Naive thymus-derived CD4-positive, alpha-beta T cell (primary cell): ENCODE measurements at regions of chr21 and their contacts with region 1.

Region 1: GRCh38 chr21:31180256-31181081 is 142.2 kb upstream of the KRTAP19-8 start:
- DNase-seq: peak in 6 of 9 donors; percentile 33 to 65 (median 50)
- ATAC-seq: peak; percentile 30
- H3K4me3 ChIP-seq: peak overlapping the region; percentile 46
- H3K4me3 Mint-ChIP-seq: peak overlapping the region; percentile 82 to 100 (median 87)
- H3K27ac ChIP-seq: peak overlapping the region; percentile 79
- H3K27ac Mint-ChIP-seq: peak overlapping the region; percentile 96 to 100 (median 99)
- H3K4me1 ChIP-seq: peaks cover 12 to 73% of the 10 kb centered on the region in 2 donors
- H3K4me1 Mint-ChIP-seq: peaks cover 44 to 92% (median 72%) of the 10 kb centered on the region in 7 donors
- H3K27me3 ChIP-seq: no peaks in the 10 kb centered on the region
- H3K27me3 Mint-ChIP-seq: no peaks in the 10 kb centered on the region

Region 2: GRCh38 chr21:29298348-29299045 is 1882.0 kb before region 1 on chr21 and contains the start of gene BACH1:
- CTCF ChIA-PET with region 1: no interaction called
- POLR2A ChIA-PET with region 1: no interaction called
- intact Hi-C with region 1: loop called in 1 of 2 experiments (anchors 10 kb)
- DNase-seq: peak; percentile 59 to 91 (median 76)
- ATAC-seq: peak; percentile 80
- H3K4me3 ChIP-seq: peak within 1 kb of the TSS; percentile 71
- H3K4me3 Mint-ChIP-seq: peak within 1 kb of the TSS; percentile 84 to 94 (median 90)
- H3K27ac ChIP-seq: peak within 1 kb of the TSS; percentile 86
- H3K27ac Mint-ChIP-seq: peak within 1 kb of the TSS; percentile 71 to 91 (median 78)
- H3K4me1 ChIP-seq: peaks cover 4 to 47% of the 10 kb centered on the region in 2 donors
- H3K4me1 Mint-ChIP-seq: peaks cover 42 to 85% (median 74%) of the 10 kb centered on the region in 7 donors
- H3K27me3 ChIP-seq: no peaks in the 10 kb centered on the region
- H3K27me3 Mint-ChIP-seq: peaks cover 0 to 3% (median 0%) of the 10 kb centered on the region in 5 donors
- total RNA-seq, gene BACH1: 26.0 to 95.6 (median 45.5) TPM

Region 3: DNA sequence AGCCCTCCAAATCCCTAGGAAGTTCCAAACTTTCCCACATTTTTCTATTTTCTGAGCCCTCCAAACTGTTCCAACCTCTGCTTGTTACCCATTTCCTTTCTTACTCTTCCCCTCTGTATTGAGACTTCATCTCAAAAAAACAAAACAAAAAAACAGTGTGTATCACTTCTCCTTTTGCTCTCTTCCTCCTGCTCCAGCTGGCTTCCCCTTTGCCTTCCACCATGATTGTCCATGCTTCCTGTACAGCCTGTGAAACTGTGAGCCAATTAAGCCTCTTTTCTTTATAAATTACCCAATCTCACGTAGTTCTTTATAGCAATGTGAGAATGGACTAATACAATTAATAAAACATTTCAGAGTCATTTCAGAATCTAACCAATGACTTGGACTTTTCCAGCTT is 72.6 kb before region 1 on chr21:
- CTCF ChIA-PET with region 1: interaction called, 21 read pairs
- POLR2A ChIA-PET with region 1: interaction called, 19 read pairs
- intact Hi-C with region 1: loop called (anchors 1 to 2 kb)
- DNase-seq: no peak
- ATAC-seq: peak; percentile 66
- H3K4me3 ChIP-seq: no peak overlapping the region
- H3K4me3 Mint-ChIP-seq: no peak overlapping the region
- H3K27ac ChIP-seq: no peak overlapping the region
- H3K27ac Mint-ChIP-seq: peak overlapping the region in 5 of 9 donors; percentile 0 to 73 (median 22)
- H3K4me1 ChIP-seq: peaks cover 5 to 12% of the 10 kb centered on the region in 2 donors
- H3K4me1 Mint-ChIP-seq: peaks cover 17 to 35% (median 25%) of the 10 kb centered on the region in 7 donors
- H3K27me3 ChIP-seq: no peaks in the 10 kb centered on the region
- H3K27me3 Mint-ChIP-seq: no peaks in the 10 kb centered on the region

Region 4: GRCh38 chr21:31142600-31142999 is 37.9 kb before region 1 on chr21:
- CTCF ChIA-PET with region 1: interaction called, 19 read pairs
- POLR2A ChIA-PET with region 1: interaction called, 6 read pairs
- intact Hi-C with region 1: loop called in 1 of 2 experiments (anchors 1 kb)
- DNase-seq: peak in 7 of 9 donors; percentile 34 to 64 (median 52)
- ATAC-seq: peak; percentile 90
- H3K4me3 ChIP-seq: no peak overlapping the region
- H3K4me3 Mint-ChIP-seq: peak overlapping the region in 1 of 10 donors; percentile 16
- H3K27ac ChIP-seq: no peak overlapping the region
- H3K27ac Mint-ChIP-seq: peak overlapping the region in 2 of 9 donors; percentile 28 to 41
- H3K4me1 ChIP-seq: peaks cover 0 to 20% of the 10 kb centered on the region in 2 donors
- H3K4me1 Mint-ChIP-seq: peaks cover 8 to 70% (median 50%) of the 10 kb centered on the region in 7 donors
- H3K27me3 ChIP-seq: no peaks in the 10 kb centered on the region
- H3K27me3 Mint-ChIP-seq: no peaks in the 10 kb centered on the region

Region 5: GRCh38 chr21:31343680-31344480 is 163.4 kb after region 1 on chr21 and contains the start of gene TIAM1:
- CTCF ChIA-PET with region 1: no interaction called
- POLR2A ChIA-PET with region 1: no interaction called
- intact Hi-C with region 1: no loop called
- DNase-seq: no peak
- ATAC-seq: peak; percentile 73
- H3K4me3 ChIP-seq: peak within 1 kb of the TSS; percentile 34
- H3K4me3 Mint-ChIP-seq: peak within 1 kb of the TSS; percentile 77 to 99 (median 86)
- H3K27ac ChIP-seq: no peak within 1 kb of the TSS
- H3K27ac Mint-ChIP-seq: peak within 1 kb of the TSS in 6 of 9 donors; percentile 25 to 84 (median 76)
- H3K4me1 ChIP-seq: peaks cover 0 to 8% of the 10 kb centered on the region in 2 donors
- H3K4me1 Mint-ChIP-seq: peaks cover 19 to 56% (median 31%) of the 10 kb centered on the region in 7 donors
- H3K27me3 ChIP-seq: peaks cover 0 to 9% of the 10 kb centered on the region in 2 donors
- H3K27me3 Mint-ChIP-seq: peaks cover 35 to 49% (median 42%) of the 10 kb centered on the region in 5 donors
- total RNA-seq, gene TIAM1: 53.5 to 103 (median 83.8) TPM

Region 6: GRCh38 chr21:31354604-31355443 is 174.4 kb after region 1 on chr21:
- CTCF ChIA-PET with region 1: interaction called, 3 read pairs
- POLR2A ChIA-PET with region 1: no interaction called
- intact Hi-C with region 1: loop called in 1 of 2 experiments (anchors 2 kb)
- DNase-seq: peak; percentile 17 to 85 (median 76)
- ATAC-seq: peak; percentile 92
- H3K4me3 ChIP-seq: no peak overlapping the region
- H3K4me3 Mint-ChIP-seq: peak overlapping the region; percentile 4 to 74 (median 60)
- H3K27ac ChIP-seq: peak overlapping the region; percentile 46
- H3K27ac Mint-ChIP-seq: peak overlapping the region; percentile 48 to 95 (median 70)
- H3K4me1 ChIP-seq: peaks cover 8 to 28% of the 10 kb centered on the region in 2 donors
- H3K4me1 Mint-ChIP-seq: peaks cover 11 to 52% (median 43%) of the 10 kb centered on the region in 7 donors
- H3K27me3 ChIP-seq: no peaks in the 10 kb centered on the region
- H3K27me3 Mint-ChIP-seq: no peaks in the 10 kb centered on the region

Region 7: DNA sequence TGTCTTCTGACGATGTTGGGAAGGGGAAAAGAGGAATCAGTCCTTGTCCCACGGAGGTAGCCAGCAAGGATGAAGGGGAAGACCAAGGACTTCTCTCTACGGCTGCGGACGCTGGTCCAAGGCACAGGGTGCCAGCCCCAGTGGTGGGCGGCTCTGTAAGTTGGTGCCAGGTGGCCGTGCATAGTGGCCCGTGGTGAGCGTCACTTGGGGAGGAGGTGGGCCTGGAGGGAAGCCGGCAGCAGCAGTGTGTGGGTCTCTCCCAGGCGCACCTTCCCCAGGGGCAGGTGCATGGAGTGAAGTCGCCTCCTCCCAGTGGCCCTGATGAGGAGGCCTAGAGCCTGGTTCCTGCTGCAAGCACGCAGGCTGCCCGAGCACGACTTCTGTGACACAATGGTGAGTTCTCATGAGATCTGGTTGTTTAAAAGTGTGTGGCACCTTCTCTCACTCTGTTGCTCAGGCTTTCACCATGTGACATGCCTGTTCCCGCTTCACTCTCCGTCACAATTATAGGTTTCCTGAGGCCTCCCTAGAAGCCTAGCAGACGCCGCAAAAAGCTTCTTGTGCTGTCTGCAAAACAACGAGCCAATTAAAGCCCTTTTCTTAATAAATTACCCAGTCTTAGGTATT is 207.2 kb after region 1 on chr21:
- CTCF ChIA-PET with region 1: no interaction called
- POLR2A ChIA-PET with region 1: no interaction called
- intact Hi-C with region 1: no loop called
- DNase-seq: no peak
- ATAC-seq: no peak
- H3K4me3 ChIP-seq: no peak overlapping the region
- H3K4me3 Mint-ChIP-seq: no peak overlapping the region
- H3K27ac ChIP-seq: no peak overlapping the region
- H3K27ac Mint-ChIP-seq: no peak overlapping the region
- H3K4me1 ChIP-seq: no peaks in the 10 kb centered on the region
- H3K4me1 Mint-ChIP-seq: peaks cover 0 to 8% (median 0%) of the 10 kb centered on the region in 7 donors
- H3K27me3 ChIP-seq: no peaks in the 10 kb centered on the region
- H3K27me3 Mint-ChIP-seq: peaks cover 0 to 6% (median 0%) of the 10 kb centered on the region in 5 donors

Region 8: DNA sequence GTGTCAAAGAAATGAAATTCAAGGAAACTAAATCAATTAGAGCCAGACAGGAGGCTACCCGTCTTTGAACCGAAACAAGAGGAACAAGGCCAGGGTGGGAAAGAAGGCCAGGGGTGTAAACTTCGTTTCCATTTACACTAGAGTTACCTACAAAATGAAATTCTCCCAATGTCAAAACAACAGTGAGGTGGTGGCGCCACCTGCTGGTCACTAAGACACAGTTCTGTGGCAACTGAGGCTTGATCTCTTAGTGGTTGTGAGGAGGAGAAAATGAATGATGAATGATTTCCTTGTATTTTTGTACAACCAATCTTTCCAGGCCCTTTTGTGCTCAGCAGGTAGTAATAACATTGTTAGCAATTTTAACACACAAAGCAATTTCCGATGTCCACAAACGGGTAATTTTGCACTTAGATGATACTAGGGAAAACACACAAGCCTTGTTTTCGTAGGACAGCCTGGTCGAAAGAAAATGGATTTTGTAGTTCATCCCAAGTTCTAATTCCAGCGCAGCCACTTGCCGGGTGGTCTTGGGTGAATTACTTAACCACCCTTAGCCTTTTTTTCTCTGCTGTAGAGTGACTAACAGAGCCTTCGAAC is 424.2 kb after region 1 on chr21:
- CTCF ChIA-PET with region 1: interaction called, 5 read pairs
- POLR2A ChIA-PET with region 1: interaction called, 3 read pairs
- intact Hi-C with region 1: loop called in 1 of 2 experiments (anchors 1 kb)
- DNase-seq: peak; percentile 32 to 71 (median 64)
- ATAC-seq: peak; percentile 83
- H3K4me3 ChIP-seq: no peak overlapping the region
- H3K4me3 Mint-ChIP-seq: no peak overlapping the region
- H3K27ac ChIP-seq: no peak overlapping the region
- H3K27ac Mint-ChIP-seq: no peak overlapping the region
- H3K4me1 ChIP-seq: no peaks in the 10 kb centered on the region
- H3K4me1 Mint-ChIP-seq: peaks cover 0 to 6% (median 0%) of the 10 kb centered on the region in 7 donors
- H3K27me3 ChIP-seq: no peaks in the 10 kb centered on the region
- H3K27me3 Mint-ChIP-seq: peaks cover 0 to 5% (median 0%) of the 10 kb centered on the region in 5 donors

Region 9: DNA sequence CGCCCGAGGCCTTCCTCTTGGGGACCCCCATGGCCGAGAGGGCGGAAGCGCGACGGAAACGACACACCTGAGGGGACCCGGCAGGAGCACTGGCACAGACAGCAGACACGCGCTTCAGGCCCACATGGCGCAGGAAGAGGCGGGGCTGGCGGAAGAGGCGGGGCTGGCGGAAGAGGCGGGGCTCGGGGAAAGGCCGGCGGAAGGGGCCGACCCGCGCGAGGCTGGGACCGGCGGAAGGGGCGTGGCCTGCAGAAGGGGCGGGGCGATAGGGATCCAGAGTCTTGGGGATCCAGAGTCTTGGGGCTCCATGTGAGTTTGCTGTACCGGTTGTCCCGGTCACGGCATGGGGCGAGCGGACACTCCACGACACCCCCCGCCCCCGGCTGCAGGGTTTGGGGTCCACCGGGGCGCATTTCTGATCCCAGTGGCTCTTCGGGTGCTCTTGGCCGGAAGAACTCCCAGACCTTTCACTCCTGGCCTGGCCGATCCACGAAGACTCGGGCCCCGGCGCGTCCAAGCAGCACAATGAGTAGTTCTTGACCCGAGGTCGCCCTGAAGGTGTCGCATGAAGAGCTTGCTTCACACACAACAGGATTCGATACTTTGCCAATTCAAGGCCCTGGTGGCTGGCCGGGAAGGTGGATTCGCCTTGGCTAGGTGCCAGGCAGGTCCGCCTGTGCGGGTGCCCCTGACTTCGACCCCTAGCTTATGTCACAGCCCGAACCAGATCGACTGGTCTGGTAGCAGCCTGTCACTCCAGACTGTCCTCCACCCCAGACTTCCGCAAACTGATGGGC is 1212.6 kb after region 1 on chr21 and contains the start of gene URB1:
- CTCF ChIA-PET with region 1: interaction called, 3 read pairs
- POLR2A ChIA-PET with region 1: no interaction called
- intact Hi-C with region 1: loop called in 1 of 2 experiments (anchors 10 kb)
- DNase-seq: peak; percentile 88 to 99 (median 94)
- ATAC-seq: peak; percentile 99
- H3K4me3 ChIP-seq: peak within 1 kb of the TSS; percentile 85
- H3K4me3 Mint-ChIP-seq: peak within 1 kb of the TSS; percentile 81 to 92 (median 86)
- H3K27ac ChIP-seq: peak within 1 kb of the TSS; percentile 70
- H3K27ac Mint-ChIP-seq: peak within 1 kb of the TSS; percentile 46 to 90 (median 71)
- H3K4me1 ChIP-seq: peaks cover 8 to 12% of the 10 kb centered on the region in 2 donors
- H3K4me1 Mint-ChIP-seq: peaks cover 34 to 52% (median 43%) of the 10 kb centered on the region in 7 donors
- H3K27me3 ChIP-seq: no peaks in the 10 kb centered on the region
- H3K27me3 Mint-ChIP-seq: peaks cover 2 to 20% (median 3%) of the 10 kb centered on the region in 5 donors
- total RNA-seq, gene URB1: 14.5 to 20.6 (median 17.9) TPM